ENCODE measurements at regions of chr11 and their contacts with region 1.

Region 1: GRCh38 chr11:130002846-130003716 is 446 bp upstream of the PRDM10 start:
- DNase-seq: peak; percentile 99
- H3K4me3 ChIP-seq: peak overlapping the region; percentile 60
- H3K4me3 Mint-ChIP-seq: peak overlapping the region; percentile 97
- H3K27ac Mint-ChIP-seq: peak overlapping the region; percentile 100
- H3K4me1 ChIP-seq: peaks cover 43% of the 10 kb centered on the region
- H3K4me1 Mint-ChIP-seq: peaks cover 35% of the 10 kb centered on the region
- H3K27me3 ChIP-seq: no peaks in the 10 kb centered on the region
- H3K27me3 Mint-ChIP-seq: no peaks in the 10 kb centered on the region
- CTCF ChIP-seq: no peak

Region 2: GRCh38 chr11:129861702-129862113 is 141.4 kb before region 1 on chr11:
- CTCF ChIA-PET with region 1: no interaction called
- POLR2A ChIA-PET with region 1: interaction called, 20 read pairs
- intact Hi-C with region 1: no loop called
- DNase-seq: peak; percentile 96 to 99
- H3K4me3 ChIP-seq: no peak overlapping the region
- H3K4me3 Mint-ChIP-seq: peak overlapping the region; percentile 83
- H3K27ac Mint-ChIP-seq: peak overlapping the region; percentile 95
- H3K4me1 ChIP-seq: peaks cover 53% of the 10 kb centered on the region
- H3K4me1 Mint-ChIP-seq: peaks cover 41% of the 10 kb centered on the region
- H3K27me3 ChIP-seq: no peaks in the 10 kb centered on the region
- H3K27me3 Mint-ChIP-seq: no peaks in the 10 kb centered on the region
- CTCF ChIP-seq: no peak

Region 3: DNA sequence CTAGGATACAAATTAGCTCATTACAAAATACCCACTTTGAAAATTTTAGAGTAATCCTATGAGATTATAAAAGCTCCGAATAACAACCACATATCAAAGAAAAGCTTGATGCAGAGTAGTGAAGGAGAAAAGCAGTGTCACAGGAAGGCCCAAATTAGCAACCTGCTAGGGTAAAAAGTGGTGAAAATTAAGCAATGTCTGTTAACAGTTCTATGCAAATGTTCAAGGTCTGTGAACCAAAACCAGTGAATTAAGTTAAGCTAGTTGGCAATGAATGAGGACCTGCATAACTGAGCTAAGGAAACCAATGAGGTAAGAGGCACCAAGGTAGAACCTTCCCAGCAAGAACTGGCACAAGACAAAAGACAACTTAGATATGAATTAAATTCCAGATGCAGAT is 30.0 kb before region 1 on chr11:
- CTCF ChIA-PET with region 1: interaction called, 10 read pairs
- POLR2A ChIA-PET with region 1: interaction called, 44 read pairs
- intact Hi-C with region 1: loop called (anchors 1 kb)
- DNase-seq: no peak
- H3K4me3 ChIP-seq: no peak overlapping the region
- H3K4me3 Mint-ChIP-seq: no peak overlapping the region
- H3K27ac Mint-ChIP-seq: no peak overlapping the region
- H3K4me1 ChIP-seq: peaks cover 23% of the 10 kb centered on the region
- H3K4me1 Mint-ChIP-seq: peaks cover 34% of the 10 kb centered on the region
- H3K27me3 ChIP-seq: no peaks in the 10 kb centered on the region
- H3K27me3 Mint-ChIP-seq: no peaks in the 10 kb centered on the region
- CTCF ChIP-seq: no peak

Region 4: GRCh38 chr11:130043306-130043974 is 40.4 kb after region 1 on chr11:
- CTCF ChIA-PET with region 1: no interaction called
- POLR2A ChIA-PET with region 1: interaction called, 13 read pairs
- intact Hi-C with region 1: no loop called
- DNase-seq: no peak
- H3K4me3 ChIP-seq: no peak overlapping the region
- H3K4me3 Mint-ChIP-seq: no peak overlapping the region
- H3K27ac Mint-ChIP-seq: no peak overlapping the region
- H3K4me1 ChIP-seq: no peaks in the 10 kb centered on the region
- H3K4me1 Mint-ChIP-seq: peaks cover 16% of the 10 kb centered on the region
- H3K27me3 ChIP-seq: no peaks in the 10 kb centered on the region
- H3K27me3 Mint-ChIP-seq: no peaks in the 10 kb centered on the region
- CTCF ChIP-seq: no peak

Region 5: GRCh38 chr11:130124096-130124495 is 121.0 kb after region 1 on chr11:
- CTCF ChIA-PET with region 1: interaction called, 3 read pairs
- POLR2A ChIA-PET with region 1: interaction called, 18 read pairs
- intact Hi-C with region 1: loop called (anchors 2 kb)
- DNase-seq: peak; percentile 66 to 67
- H3K4me3 ChIP-seq: no peak overlapping the region
- H3K4me3 Mint-ChIP-seq: no peak overlapping the region
- H3K27ac Mint-ChIP-seq: peak overlapping the region; percentile 82
- H3K4me1 ChIP-seq: peaks cover 60% of the 10 kb centered on the region
- H3K4me1 Mint-ChIP-seq: peaks cover 58% of the 10 kb centered on the region
- H3K27me3 ChIP-seq: no peaks in the 10 kb centered on the region
- H3K27me3 Mint-ChIP-seq: no peaks in the 10 kb centered on the region
- CTCF ChIP-seq: no peak

Region 6: DNA sequence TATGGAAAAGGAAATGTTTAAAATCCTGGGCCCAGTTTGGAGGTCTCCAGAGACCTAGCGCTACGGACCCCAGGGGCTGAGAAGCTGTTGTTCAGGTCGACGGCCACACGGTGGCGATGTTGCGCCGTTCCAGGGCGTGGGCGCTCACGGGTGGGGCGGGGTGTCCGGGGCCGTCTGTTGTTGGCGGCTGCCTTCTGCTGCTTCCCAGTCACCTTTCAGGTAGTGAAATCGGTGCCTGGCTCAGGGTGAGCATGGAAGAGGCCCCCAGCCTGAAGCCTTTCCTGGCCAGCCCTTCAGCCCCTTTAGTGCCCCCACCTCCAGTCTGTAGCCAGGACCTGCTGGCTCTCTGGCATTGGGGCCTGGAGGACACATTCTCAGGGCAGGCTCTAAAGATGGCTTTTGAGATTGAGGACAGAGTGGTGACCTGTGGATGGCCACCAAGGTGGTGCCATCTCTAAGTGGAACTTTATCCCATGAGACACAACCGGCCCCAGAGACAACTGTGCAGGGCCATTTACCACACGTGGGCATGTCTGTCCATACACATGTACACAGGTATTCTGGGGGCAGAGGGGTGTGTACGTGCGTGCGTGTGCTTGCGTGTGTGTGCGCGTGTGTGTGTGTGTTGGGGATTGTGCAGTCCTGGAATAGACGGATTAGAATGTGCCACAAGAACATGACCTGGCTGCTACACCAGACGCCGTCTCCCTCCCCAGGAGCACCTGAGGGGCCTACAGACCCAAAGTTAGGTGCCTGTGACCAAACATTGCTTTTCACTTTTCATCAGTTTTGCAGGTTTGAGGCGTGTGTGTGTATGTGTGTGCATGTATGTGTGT is 210.3 kb after region 1 on chr11:
- CTCF ChIA-PET with region 1: no interaction called
- POLR2A ChIA-PET with region 1: interaction called, 14 read pairs
- intact Hi-C with region 1: no loop called
- DNase-seq: peak; percentile 70 to 83
- H3K4me3 ChIP-seq: no peak overlapping the region
- H3K4me3 Mint-ChIP-seq: no peak overlapping the region
- H3K27ac Mint-ChIP-seq: no peak overlapping the region
- H3K4me1 ChIP-seq: 0 out of 2 replicates have a peak, but pooled peaks cover 9% of the 10 kb centered on the region
- H3K4me1 Mint-ChIP-seq: peaks cover 9% of the 10 kb centered on the region
- H3K27me3 ChIP-seq: no peaks in the 10 kb centered on the region
- H3K27me3 Mint-ChIP-seq: no peaks in the 10 kb centered on the region
- CTCF ChIP-seq: peak; percentile 98 to 99